Heart left ventricle (tissue), 16 donors: ENCODE measurements at regions of chr19 and their contacts with region 1.

Region 1: GRCh38 chr19:29811125-29812079 is at the start of gene CCNE1:
- DNase-seq: peak; percentile 94 to 97 (median 96)
- ATAC-seq: peak; percentile 91 to 99 (median 98)
- H3K4me3 ChIP-seq: peak within 1 kb of the TSS; percentile 37 to 86 (median 64)
- H3K27ac ChIP-seq: peak within 1 kb of the TSS in 11 of 12 donors; percentile 49 to 73 (median 65)
- H3K4me1 ChIP-seq: peaks cover 0 to 18% (median 6%) of the 10 kb centered on the region in 12 donors
- H3K27me3 ChIP-seq: no peaks in the 10 kb centered on the region
- CTCF ChIP-seq: no peak
- POLR2A ChIP-seq: peak in 1 of 2 donors; percentile 19
- total RNA-seq, gene CCNE1: 1.3 to 5.4 (median 2.5) TPM

Region 2: GRCh38 chr19:29724102-29724641 is 87.2 kb before region 1 on chr19:
- intact Hi-C with region 1: no loop called
- DNase-seq: no peak
- ATAC-seq: peak; percentile 43 to 57 (median 50)
- H3K4me3 ChIP-seq: peak overlapping the region; percentile 5 to 47 (median 39)
- H3K27ac ChIP-seq: no peak overlapping the region
- H3K4me1 ChIP-seq: peaks cover 0 to 13% (median 10%) of the 10 kb centered on the region in 12 donors
- H3K27me3 ChIP-seq: peaks cover 0 to 45% (median 4%) of the 10 kb centered on the region in 9 donors
- CTCF ChIP-seq: no peak
- POLR2A ChIP-seq: no peak

Region 3: GRCh38 chr19:29844891-29845572 is 33.6 kb after region 1 on chr19:
- intact Hi-C with region 1: loop called in 9 of 10 experiments (anchors 1 to 5 kb)
- DNase-seq: peak; percentile 90 to 96 (median 94)
- ATAC-seq: peak; percentile 91 to 95 (median 94)
- H3K4me3 ChIP-seq: peak overlapping the region; percentile 57 to 87 (median 72)
- H3K27ac ChIP-seq: peak overlapping the region in 11 of 12 donors; percentile 58 to 87 (median 76)
- H3K4me1 ChIP-seq: peaks cover 7 to 26% (median 20%) of the 10 kb centered on the region in 12 donors
- H3K27me3 ChIP-seq: no peaks in the 10 kb centered on the region
- CTCF ChIP-seq: peak in 2 of 12 donors; percentile 6 to 7
- POLR2A ChIP-seq: peak in 1 of 2 donors; percentile 37

Region 4: DNA sequence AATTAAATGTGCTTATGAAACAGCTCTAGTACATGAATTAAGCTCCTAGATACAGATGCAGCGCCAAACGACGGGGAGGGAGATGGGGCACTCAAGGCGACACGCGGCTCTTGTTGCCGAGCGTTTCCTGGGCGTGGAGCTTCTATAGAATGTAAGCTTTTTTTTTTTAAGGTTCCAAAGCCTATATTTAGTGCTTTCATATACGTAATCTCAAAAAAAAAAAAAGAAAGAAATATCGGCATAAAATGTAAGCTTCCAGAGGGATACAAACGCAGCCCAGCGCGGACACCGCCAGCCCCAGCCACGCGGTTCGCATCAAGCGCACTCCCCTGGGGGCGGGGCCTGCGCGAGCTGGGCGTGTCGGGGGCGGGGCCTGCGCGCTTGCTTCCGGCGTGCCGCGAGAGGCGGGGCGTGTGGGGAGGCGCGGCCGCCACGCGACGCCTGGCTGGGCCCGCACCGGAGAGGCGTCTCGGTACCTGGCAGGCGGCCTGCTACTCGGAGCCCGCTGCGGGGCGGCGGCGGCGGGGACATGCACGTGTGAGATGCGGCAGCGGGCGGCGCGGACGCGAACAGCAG is 130.5 kb after region 1 on chr19 and contains the start of gene URI1:
- intact Hi-C with region 1: loop called in 2 of 10 experiments (anchors 5 to 10 kb)
- DNase-seq: peak; percentile 90 to 96 (median 92)
- ATAC-seq: peak; percentile 95 to 99 (median 98)
- H3K4me3 ChIP-seq: peak within 1 kb of the TSS; percentile 68 to 98 (median 86)
- H3K27ac ChIP-seq: peak within 1 kb of the TSS in 11 of 12 donors; percentile 54 to 81 (median 75)
- H3K4me1 ChIP-seq: peaks cover 0 to 45% (median 24%) of the 10 kb centered on the region in 12 donors
- H3K27me3 ChIP-seq: no peaks in the 10 kb centered on the region
- CTCF ChIP-seq: no peak
- POLR2A ChIP-seq: peak; percentile 10 to 46
- total RNA-seq, gene URI1: 24.4 to 53.7 (median 44.2) TPM

Region 5: DNA sequence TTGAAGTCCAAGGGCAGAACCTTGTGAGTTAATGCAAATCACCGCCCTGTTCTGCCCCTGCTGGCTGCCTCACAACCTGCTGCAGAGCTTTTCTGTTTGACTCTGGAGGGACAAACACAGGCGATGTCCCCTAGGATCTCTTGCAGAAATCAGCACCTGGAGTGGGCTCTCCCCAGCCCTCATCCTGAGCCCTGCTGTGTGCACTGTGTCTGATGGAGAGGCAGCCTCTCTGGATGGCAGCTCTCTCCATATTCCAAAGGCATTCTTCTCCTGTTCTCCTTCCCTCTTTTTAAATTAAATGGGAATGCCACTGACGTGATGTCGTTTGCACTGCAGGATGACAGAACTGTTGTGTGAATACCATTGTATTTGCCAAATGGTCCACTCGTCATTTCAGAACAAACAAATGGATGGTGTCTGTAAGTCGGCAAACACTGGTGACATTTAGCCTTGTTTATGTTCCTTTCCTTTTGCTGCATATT is 744.9 kb after region 1 on chr19:
- intact Hi-C with region 1: no loop called
- DNase-seq: no peak
- ATAC-seq: peak in 1 of 4 donors; percentile 15
- H3K4me3 ChIP-seq: no peak overlapping the region
- H3K27ac ChIP-seq: no peak overlapping the region
- H3K4me1 ChIP-seq: peaks cover 0 to 2% (median 0%) of the 10 kb centered on the region in 12 donors
- H3K27me3 ChIP-seq: peaks cover 0 to 22% (median 0%) of the 10 kb centered on the region in 9 donors
- CTCF ChIP-seq: no peak
- POLR2A ChIP-seq: no peak